ENCODE measurements at regions of chr20 and their contacts with region 1.

Region 1: GRCh38 chr20:3710703-3711483 is 1.5 kb downstream of the SIGLEC1 start:
- DNase-seq: peak; percentile 16
- ATAC-seq: peak; percentile 84
- H3K4me3 ChIP-seq: no peak overlapping the region
- H3K27ac ChIP-seq: no peak overlapping the region
- H3K4me1 ChIP-seq: peaks cover 0 to 13% of the 10 kb centered on the region in 2 experiments; a peak in 3 of 4 replicates
- H3K27me3 ChIP-seq: no peaks in the 10 kb centered on the region
- CTCF ChIP-seq: peak; percentile 93 to 99 (median 96)
- POLR2A ChIP-seq: no peak
- RAD21 ChIP-seq: peak; percentile 84

Region 2: DNA sequence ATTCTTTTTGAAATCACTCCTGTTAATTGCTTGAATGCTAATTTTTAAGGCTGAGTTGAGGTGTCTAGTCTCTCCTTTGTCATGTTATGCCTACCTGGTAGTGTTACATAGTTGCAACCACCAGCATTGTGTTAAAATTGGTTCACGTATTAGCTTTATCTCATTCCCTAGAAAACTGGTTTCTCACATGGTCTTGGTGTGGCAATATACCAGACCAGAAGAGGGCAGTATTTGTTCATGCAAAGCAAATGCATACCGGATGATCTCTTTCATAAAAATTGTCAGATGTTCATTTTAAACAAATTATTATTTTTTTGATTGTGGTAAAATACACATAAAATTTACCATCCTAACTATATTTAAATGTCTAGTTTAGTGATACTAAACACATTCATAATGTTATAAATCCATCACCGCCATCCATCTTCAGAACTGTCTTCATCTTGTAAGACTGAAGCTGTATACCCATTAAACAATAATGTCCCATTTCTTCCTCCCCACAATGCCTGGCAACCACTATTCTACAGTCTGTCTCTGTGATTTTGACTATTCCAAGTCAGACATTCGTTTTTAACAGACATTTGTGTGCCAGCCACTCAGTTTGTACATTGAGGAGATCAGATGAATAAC is 147.2 kb before region 1 on chr20:
- CTCF ChIA-PET with region 1: interaction called, 30 read pairs
- POLR2A ChIA-PET with region 1: no interaction called
- RAD21 ChIA-PET with region 1: interaction called, 3 to 8 read pairs
- intact Hi-C with region 1: loop called (anchors 1 kb)
- DNase-seq: peak; percentile 41
- ATAC-seq: peak; percentile 77
- H3K4me3 ChIP-seq: no peak overlapping the region
- H3K27ac ChIP-seq: no peak overlapping the region
- H3K4me1 ChIP-seq: no peaks in the 10 kb centered on the region
- H3K27me3 ChIP-seq: no peaks in the 10 kb centered on the region
- CTCF ChIP-seq: peak; percentile 57 to 83 (median 77)
- POLR2A ChIP-seq: no peak
- RAD21 ChIP-seq: peak; percentile 76

Region 3: GRCh38 chr20:3686867-3687321 is 24.0 kb before region 1 on chr20:
- CTCF ChIA-PET with region 1: interaction called, 12 read pairs
- POLR2A ChIA-PET with region 1: no interaction called
- RAD21 ChIA-PET with region 1: no interaction called
- intact Hi-C with region 1: no loop called
- DNase-seq: no peak
- ATAC-seq: no peak
- H3K4me3 ChIP-seq: no peak overlapping the region
- H3K27ac ChIP-seq: no peak overlapping the region
- H3K4me1 ChIP-seq: peaks cover 0 to 4% of the 10 kb centered on the region in 2 experiments; a peak in 1 of 4 replicates
- H3K27me3 ChIP-seq: no peaks in the 10 kb centered on the region
- CTCF ChIP-seq: no peak
- POLR2A ChIP-seq: no peak
- RAD21 ChIP-seq: no peak

Region 4: GRCh38 chr20:3698591-3699001 is 12.3 kb before region 1 on chr20:
- CTCF ChIA-PET with region 1: interaction called, 16 read pairs
- POLR2A ChIA-PET with region 1: no interaction called
- RAD21 ChIA-PET with region 1: no interaction called
- intact Hi-C with region 1: no loop called
- DNase-seq: no peak
- ATAC-seq: no peak
- H3K4me3 ChIP-seq: no peak overlapping the region
- H3K27ac ChIP-seq: no peak overlapping the region
- H3K4me1 ChIP-seq: no peaks in the 10 kb centered on the region
- H3K27me3 ChIP-seq: no peaks in the 10 kb centered on the region
- CTCF ChIP-seq: no peak
- POLR2A ChIP-seq: no peak
- RAD21 ChIP-seq: no peak

Region 5: DNA sequence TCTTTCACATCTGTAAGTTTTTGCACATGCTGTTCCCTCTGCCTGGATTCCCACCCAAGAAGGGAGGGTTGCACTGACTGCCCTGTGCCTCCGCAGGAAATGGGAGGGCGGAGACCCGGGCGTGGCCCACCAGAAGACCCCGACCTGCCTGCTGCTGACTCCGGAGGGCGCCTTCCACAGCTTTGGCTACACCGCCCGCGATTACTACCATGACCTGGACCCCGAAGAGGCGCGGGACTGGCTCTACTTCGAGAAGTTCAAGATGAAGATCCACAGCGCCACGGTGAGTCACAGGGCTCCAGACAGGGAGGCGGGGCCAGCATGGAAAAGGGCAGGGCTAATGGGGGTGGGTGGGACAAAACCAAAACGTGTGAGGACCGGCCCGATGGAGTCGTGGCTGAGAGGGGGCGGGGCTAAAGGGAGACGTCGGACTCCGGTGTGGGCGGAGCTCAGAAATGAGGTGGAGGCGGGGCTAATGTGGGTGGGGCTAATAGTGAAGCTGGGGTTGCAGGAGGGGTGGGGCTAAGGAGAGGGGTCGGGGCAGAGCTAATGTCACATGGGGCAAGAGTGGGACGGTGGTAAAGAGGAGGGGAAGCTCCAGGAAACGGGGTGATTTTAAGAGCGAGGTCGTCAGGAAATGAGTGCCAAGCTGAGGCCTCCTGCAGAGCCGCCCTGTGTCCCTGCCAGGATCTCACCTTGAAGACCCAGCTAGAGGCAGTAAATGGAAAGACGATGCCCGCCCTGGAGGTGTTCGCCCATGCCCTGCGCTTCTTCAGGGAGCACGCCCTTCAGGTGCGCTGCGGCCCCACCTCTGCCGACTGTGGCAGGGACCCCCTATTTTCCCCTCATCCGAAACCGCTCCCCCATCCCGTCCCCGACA is 34.2 kb after region 1 on chr20:
- CTCF ChIA-PET with region 1: interaction called, 13 read pairs
- POLR2A ChIA-PET with region 1: no interaction called
- RAD21 ChIA-PET with region 1: interaction called, 3 read pairs
- intact Hi-C with region 1: no loop called
- DNase-seq: peak; percentile 88
- ATAC-seq: peak; percentile 90
- H3K4me3 ChIP-seq: peak overlapping the region; percentile 15 to 52
- H3K27ac ChIP-seq: peak overlapping the region; percentile 21; the same call in 1 of the 2 replicates
- H3K4me1 ChIP-seq: peaks cover 9 to 20% of the 10 kb centered on the region in 2 experiments
- H3K27me3 ChIP-seq: no peaks in the 10 kb centered on the region
- CTCF ChIP-seq: 0 out of 6 replicates have a peak, but pooled peaks of 1 of the 3 experiments have one; percentile 3
- POLR2A ChIP-seq: no peak
- RAD21 ChIP-seq: no peak